Heart left ventricle (tissue), 16 donors: ENCODE measurements at regions of chr5 and their contacts with region 1.

Region 1: GRCh38 chr5:135426102-135427082 is 20.8 kb downstream of the DCANP1 start:
- DNase-seq: no peak
- ATAC-seq: peak; percentile 34 to 64 (median 55)
- H3K4me3 ChIP-seq: no peak overlapping the region
- H3K27ac ChIP-seq: peak overlapping the region in 1 of 12 donors; percentile 69
- H3K4me1 ChIP-seq: peaks cover 0 to 46% (median 10%) of the 10 kb centered on the region in 12 donors
- H3K27me3 ChIP-seq: no peaks in the 10 kb centered on the region
- CTCF ChIP-seq: peak; percentile 57 to 76 (median 64)
- POLR2A ChIP-seq: no peak

Region 2: DNA sequence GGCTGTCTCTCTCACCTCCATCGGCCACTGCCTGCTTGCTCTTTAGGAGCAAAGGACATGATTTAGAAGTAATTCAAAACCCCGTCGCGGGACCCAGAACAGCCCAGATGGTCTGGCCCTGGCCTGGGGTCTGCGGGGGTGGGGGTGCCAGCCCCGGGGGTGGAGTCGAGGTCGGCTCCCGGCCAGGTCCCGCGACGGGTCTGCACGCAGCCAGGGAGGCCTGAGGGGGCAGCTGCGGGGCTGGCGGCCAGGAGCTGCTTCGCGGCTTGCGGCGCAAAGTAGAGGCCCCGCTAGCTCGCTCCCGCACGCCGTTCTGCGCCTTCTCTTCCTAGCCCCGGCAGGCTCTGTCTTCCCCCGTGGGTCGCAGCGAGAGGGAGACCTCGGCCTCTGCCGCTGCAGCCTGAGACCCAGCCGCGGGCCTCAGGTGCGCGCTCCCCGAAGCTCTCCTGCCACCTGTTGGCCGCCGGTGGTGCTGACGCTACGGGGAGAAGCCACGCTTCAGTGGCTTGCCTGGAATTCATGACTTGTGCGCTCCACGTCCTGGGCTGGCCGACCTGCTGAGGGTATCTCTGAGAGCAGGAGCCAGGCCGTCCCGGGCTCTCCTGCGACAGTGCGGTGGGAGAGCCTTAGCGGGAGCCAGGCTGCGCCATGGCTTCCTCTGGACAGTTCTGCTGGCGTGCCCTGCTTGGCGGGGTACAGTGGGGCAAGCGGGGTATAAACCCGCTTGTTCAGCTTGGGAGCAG is 235.1 kb before region 1 on chr5:
- intact Hi-C with region 1: loop called in 1 of 10 experiments (anchors 10 kb)
- DNase-seq: peak; percentile 63 to 83 (median 69)
- ATAC-seq: peak; percentile 80 to 97 (median 93)
- H3K4me3 ChIP-seq: peak overlapping the region in 11 of 12 donors; percentile 12 to 56 (median 46)
- H3K27ac ChIP-seq: no peak overlapping the region
- H3K4me1 ChIP-seq: peaks cover 0 to 17% (median 3%) of the 10 kb centered on the region in 12 donors
- H3K27me3 ChIP-seq: peaks cover 0 to 58% (median 20%) of the 10 kb centered on the region in 9 donors
- CTCF ChIP-seq: peak; percentile 74 to 88 (median 82)
- POLR2A ChIP-seq: no peak

Region 3: GRCh38 chr5:135319928-135320607 is 106.3 kb before region 1 on chr5:
- intact Hi-C with region 1: loop called in 1 of 10 experiments (anchors 10 kb)
- DNase-seq: no peak
- ATAC-seq: peak in 1 of 4 donors; percentile 37
- H3K4me3 ChIP-seq: no peak overlapping the region
- H3K27ac ChIP-seq: no peak overlapping the region
- H3K4me1 ChIP-seq: no peaks in the 10 kb centered on the region
- H3K27me3 ChIP-seq: no peaks in the 10 kb centered on the region
- CTCF ChIP-seq: peak in 2 of 12 donors; percentile 5 to 16
- POLR2A ChIP-seq: no peak

Region 4: DNA sequence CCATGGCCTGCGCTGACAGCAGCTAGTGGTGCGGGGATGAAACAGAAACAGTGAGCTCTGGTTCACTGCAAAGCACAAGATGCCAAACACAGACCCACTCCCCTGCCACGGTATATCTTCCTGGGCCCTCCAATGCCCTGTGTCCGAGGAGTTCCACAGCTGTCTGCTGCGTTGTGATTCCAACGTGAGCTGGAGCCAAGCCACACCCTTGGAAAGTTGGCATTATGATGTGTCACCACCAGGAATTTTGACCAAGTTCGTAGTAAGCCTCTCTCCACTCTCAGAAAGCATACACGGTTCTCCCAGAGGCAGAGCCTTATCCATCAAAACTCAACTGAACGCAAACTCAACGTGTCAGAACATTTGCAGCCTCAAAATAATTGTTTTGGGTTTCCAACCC is 83.0 kb before region 1 on chr5:
- intact Hi-C with region 1: loop called in 1 of 10 experiments (anchors 10 kb)
- DNase-seq: no peak
- ATAC-seq: peak in 2 of 4 donors; percentile 10 to 41
- H3K4me3 ChIP-seq: no peak overlapping the region
- H3K27ac ChIP-seq: no peak overlapping the region
- H3K4me1 ChIP-seq: peaks cover 0 to 3% (median 0%) of the 10 kb centered on the region in 12 donors
- H3K27me3 ChIP-seq: no peaks in the 10 kb centered on the region
- CTCF ChIP-seq: no peak
- POLR2A ChIP-seq: no peak

Region 5: GRCh38 chr5:135356522-135357318 is 69.7 kb before region 1 on chr5:
- intact Hi-C with region 1: loop called in 1 of 10 experiments (anchors 10 kb)
- DNase-seq: peak; percentile 84 to 91 (median 89)
- ATAC-seq: peak; percentile 93 to 98 (median 94)
- H3K4me3 ChIP-seq: no peak overlapping the region
- H3K27ac ChIP-seq: peak overlapping the region; percentile 34 to 86 (median 62)
- H3K4me1 ChIP-seq: peaks cover 4 to 55% (median 45%) of the 10 kb centered on the region in 12 donors
- H3K27me3 ChIP-seq: no peaks in the 10 kb centered on the region
- CTCF ChIP-seq: no peak
- POLR2A ChIP-seq: no peak

Region 6: GRCh38 chr5:135373736-135374515 is 52.5 kb before region 1 on chr5:
- intact Hi-C with region 1: loop called in 2 of 10 experiments (anchors 5 kb)
- DNase-seq: peak in 4 of 5 donors; percentile 43 to 70 (median 48)
- ATAC-seq: peak; percentile 84 to 88 (median 86)
- H3K4me3 ChIP-seq: no peak overlapping the region
- H3K27ac ChIP-seq: peak overlapping the region in 9 of 12 donors; percentile 13 to 58 (median 48)
- H3K4me1 ChIP-seq: peaks cover 0 to 77% (median 46%) of the 10 kb centered on the region in 12 donors
- H3K27me3 ChIP-seq: no peaks in the 10 kb centered on the region
- CTCF ChIP-seq: no peak
- POLR2A ChIP-seq: no peak

Region 7: GRCh38 chr5:135398853-135399523 is 27.4 kb before region 1 on chr5 and contains the start of gene MACROH2A1:
- intact Hi-C with region 1: loop called in 1 of 10 experiments (anchors 2 kb)
- DNase-seq: peak; percentile 92 to 95 (median 93)
- ATAC-seq: peak; percentile 78 to 98 (median 96)
- H3K4me3 ChIP-seq: peak within 1 kb of the TSS; percentile 68 to 100 (median 96)
- H3K27ac ChIP-seq: peak within 1 kb of the TSS; percentile 86 to 99 (median 96)
- H3K4me1 ChIP-seq: peaks cover 4 to 53% (median 47%) of the 10 kb centered on the region in 12 donors
- H3K27me3 ChIP-seq: no peaks in the 10 kb centered on the region
- CTCF ChIP-seq: peak in 3 of 12 donors; percentile 11 to 22 (median 14)
- POLR2A ChIP-seq: peak; percentile 44 to 87
- total RNA-seq, gene MACROH2A1: 86.5 to 170 (median 112) TPM

Region 8: GRCh38 chr5:135551593-135552447 is 125.4 kb after region 1 on chr5:
- intact Hi-C with region 1: no loop called
- DNase-seq: peak in 4 of 5 donors; percentile 38 to 68 (median 62)
- ATAC-seq: peak in 3 of 4 donors; percentile 78 to 90 (median 80)
- H3K4me3 ChIP-seq: no peak overlapping the region
- H3K27ac ChIP-seq: no peak overlapping the region
- H3K4me1 ChIP-seq: no peaks in the 10 kb centered on the region
- H3K27me3 ChIP-seq: peaks cover 0 to 84% (median 34%) of the 10 kb centered on the region in 9 donors
- CTCF ChIP-seq: peak; percentile 79 to 91 (median 85)
- POLR2A ChIP-seq: no peak

Region 9: DNA sequence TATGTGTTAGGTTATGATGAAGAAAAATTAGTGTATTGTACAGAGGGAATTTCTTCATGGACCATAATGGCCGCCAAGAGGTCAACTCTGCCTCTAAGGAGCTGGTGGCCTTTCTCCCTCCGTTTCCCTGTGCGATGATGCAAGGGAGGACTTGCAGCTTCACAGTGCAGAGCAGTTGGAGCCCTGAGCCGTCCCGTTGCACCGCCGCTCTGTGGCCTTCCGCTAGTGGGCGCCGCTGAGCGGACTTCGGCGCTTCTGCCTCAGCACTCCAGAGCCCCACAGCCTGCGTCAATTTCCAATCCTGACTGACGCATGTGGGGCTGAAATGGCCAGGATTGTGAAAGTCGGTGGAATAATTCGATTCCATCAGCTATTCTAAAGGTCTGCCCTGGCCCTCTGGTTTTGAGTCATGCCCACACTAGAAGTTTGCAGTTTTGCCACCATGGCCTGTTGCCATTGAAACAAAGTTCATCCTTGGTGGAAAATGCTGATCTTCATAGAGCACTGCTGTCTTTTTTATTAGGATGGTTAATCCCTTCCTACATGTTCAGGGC is 551.1 kb after region 1 on chr5:
- intact Hi-C with region 1: no loop called
- DNase-seq: peak; percentile 54 to 88 (median 71)
- ATAC-seq: peak; percentile 60 to 94 (median 79)
- H3K4me3 ChIP-seq: no peak overlapping the region
- H3K27ac ChIP-seq: peak overlapping the region in 1 of 12 donors; percentile 5
- H3K4me1 ChIP-seq: peaks cover 0 to 44% (median 22%) of the 10 kb centered on the region in 12 donors
- H3K27me3 ChIP-seq: no peaks in the 10 kb centered on the region
- CTCF ChIP-seq: peak; percentile 36 to 66 (median 52)
- POLR2A ChIP-seq: no peak